HepG2 (cell line): ENCODE measurements at regions of chr2 and their contacts with region 1.

Region 1: GRCh38 chr2:31170071-31170698 is 31.9 kb upstream of the GALNT14 start:
- DNase-seq: peak; percentile 52
- ATAC-seq: peak; percentile 96
- H3K4me3 ChIP-seq: no peak overlapping the region
- H3K27ac ChIP-seq: no peak overlapping the region
- H3K4me1 ChIP-seq: no peaks in the 10 kb centered on the region
- H3K27me3 ChIP-seq: no peaks in the 10 kb centered on the region
- CTCF ChIP-seq: peak; percentile 91
- EP300 ChIP-seq: no peak
- POLR2A ChIP-seq: no peak
- RAD21 ChIP-seq: peak; percentile 70

Region 2: GRCh38 chr2:30208452-30208851 is 961.7 kb before region 1 on chr2:
- CTCF ChIA-PET with region 1: no interaction called
- POLR2A ChIA-PET with region 1: no interaction called
- in situ Hi-C with region 1: loop called (anchors 25 kb)
- intact Hi-C with region 1: no loop called
- DNase-seq: peak; percentile 46
- ATAC-seq: peak; percentile 97
- H3K4me3 ChIP-seq: no peak overlapping the region
- H3K27ac ChIP-seq: no peak overlapping the region
- H3K4me1 ChIP-seq: no peaks in the 10 kb centered on the region
- H3K27me3 ChIP-seq: peaks cover 0 to 8% of the 10 kb centered on the region in 2 experiments; a peak in 2 of 5 replicates
- CTCF ChIP-seq: peak; percentile 91
- EP300 ChIP-seq: no peak
- POLR2A ChIP-seq: no peak
- RAD21 ChIP-seq: peak; percentile 82

Region 3: DNA sequence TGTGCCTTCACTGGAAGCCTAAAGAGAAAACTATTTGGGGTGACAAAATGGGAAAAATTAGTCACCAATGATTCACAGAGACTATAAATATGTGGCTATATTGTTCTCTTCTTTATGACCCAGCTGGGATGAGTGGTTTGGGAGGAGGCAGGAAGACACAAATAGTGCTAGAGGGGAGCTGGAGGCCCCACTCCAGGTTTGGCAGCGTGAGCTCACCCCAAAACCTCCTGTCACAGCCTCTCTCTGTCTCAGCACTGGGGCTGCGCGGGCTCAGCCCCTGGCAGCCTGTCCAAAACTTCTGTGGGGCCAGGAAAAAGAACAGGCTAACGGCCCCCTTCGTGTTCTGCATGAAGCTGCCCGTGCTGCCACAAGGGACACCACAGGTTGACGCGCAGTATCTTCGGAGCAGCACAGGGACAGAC is 796.3 kb before region 1 on chr2:
- CTCF ChIA-PET with region 1: no interaction called
- POLR2A ChIA-PET with region 1: no interaction called
- in situ Hi-C with region 1: no loop called
- intact Hi-C with region 1: no loop called
- DNase-seq: no peak
- ATAC-seq: peak; percentile 69
- H3K4me3 ChIP-seq: no peak overlapping the region
- H3K27ac ChIP-seq: no peak overlapping the region
- H3K4me1 ChIP-seq: no peaks in the 10 kb centered on the region
- H3K27me3 ChIP-seq: no peaks in the 10 kb centered on the region
- CTCF ChIP-seq: no peak
- EP300 ChIP-seq: no peak
- POLR2A ChIP-seq: no peak
- RAD21 ChIP-seq: no peak

Region 4: DNA sequence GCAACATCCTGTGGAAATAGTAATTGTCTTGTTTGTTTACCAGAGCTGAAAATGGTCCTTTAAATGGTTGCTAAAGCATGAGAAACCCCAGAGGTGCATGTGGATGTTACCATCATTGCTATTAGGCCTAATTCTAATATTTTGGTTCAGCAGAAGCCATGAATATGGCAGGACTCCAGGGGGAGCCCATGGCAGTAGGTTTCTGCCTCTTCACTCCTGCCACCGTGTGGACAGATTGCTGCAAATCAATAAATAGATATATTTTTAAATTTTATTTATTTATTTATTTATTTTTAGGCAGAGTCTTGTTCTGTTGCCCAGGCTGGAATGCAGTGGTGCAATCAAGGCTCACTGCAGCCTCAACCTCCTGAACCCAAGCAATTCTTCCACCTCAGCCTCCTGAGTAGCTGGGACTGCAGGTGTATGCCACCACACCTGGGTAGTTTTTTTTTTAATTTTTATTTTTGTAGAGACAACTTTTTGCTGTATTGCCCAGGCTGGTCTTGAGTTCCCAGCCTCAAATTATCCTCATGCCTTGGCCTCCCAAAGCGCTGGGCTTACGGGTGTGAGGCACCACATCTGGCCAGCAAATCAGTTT is 308.0 kb before region 1 on chr2:
- CTCF ChIA-PET with region 1: interaction called, 13 read pairs
- POLR2A ChIA-PET with region 1: no interaction called
- in situ Hi-C with region 1: loop called (anchors 5 kb)
- intact Hi-C with region 1: loop called (anchors 1 kb)
- DNase-seq: peak; percentile 79
- ATAC-seq: peak; percentile 90
- H3K4me3 ChIP-seq: no peak overlapping the region
- H3K27ac ChIP-seq: no peak overlapping the region
- H3K4me1 ChIP-seq: no peaks in the 10 kb centered on the region
- H3K27me3 ChIP-seq: peaks cover 0 to 7% of the 10 kb centered on the region in 2 experiments; a peak in 1 of 5 replicates
- CTCF ChIP-seq: peak; percentile 62
- EP300 ChIP-seq: no peak
- POLR2A ChIP-seq: no peak
- RAD21 ChIP-seq: peak; percentile 72